ENCODE measurements at regions of chr17 and their contacts with region 1.

Region 1: GRCh38 chr17:67475236-67475937 is 98.3 kb downstream of the PITPNC1 start:
- DNase-seq: peak; percentile 88
- H3K4me3 Mint-ChIP-seq: peak overlapping the region; percentile 46
- H3K27ac Mint-ChIP-seq: peak overlapping the region; percentile 82
- H3K4me1 Mint-ChIP-seq: peaks cover 45% of the 10 kb centered on the region
- H3K27me3 Mint-ChIP-seq: peaks cover 2% of the 10 kb centered on the region

Region 2: DNA sequence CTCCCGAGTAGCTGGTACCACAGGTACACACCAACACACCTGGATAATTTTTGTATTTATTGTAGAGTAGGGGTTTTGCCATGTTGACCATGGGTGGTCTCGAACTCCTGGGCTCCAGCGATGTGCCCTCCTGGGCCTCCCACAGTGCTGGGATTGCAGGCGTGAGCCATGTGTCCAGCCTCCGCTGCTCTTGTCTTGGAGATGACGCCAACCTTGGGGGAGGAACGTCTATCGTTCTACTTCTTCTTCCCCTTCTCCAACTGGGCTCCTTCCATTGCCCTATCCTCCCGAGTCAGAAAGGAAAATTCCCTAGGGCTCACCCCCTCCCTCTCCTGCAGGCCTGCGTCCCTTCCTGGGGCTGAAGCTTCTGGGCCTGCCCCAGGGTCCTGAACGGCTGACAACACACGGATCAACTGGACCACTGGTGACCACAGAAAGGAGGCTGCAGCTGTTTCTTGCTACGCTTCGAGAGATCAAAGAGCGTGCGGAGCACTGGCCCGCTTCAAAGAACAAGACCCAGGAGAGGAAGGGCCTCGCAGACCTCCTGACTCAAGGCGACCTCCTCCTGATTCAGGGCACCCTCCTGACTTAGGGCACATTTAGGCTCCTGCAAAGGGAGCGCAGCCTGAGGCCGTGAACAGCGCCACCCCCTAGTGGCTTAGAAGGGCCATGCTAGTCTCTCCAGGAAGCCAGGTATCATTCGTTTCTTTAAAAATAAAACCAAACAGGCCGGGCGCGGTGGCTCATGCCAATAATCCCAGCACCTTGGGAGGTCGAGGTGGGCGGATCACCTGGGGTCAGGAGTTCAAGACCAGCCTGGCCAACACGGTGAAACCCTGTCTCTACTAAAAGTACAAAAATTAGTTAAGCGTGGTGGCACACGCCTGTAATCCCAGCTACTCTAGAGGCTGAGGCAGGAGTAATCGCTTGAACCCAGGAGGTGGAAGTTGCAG is 181.9 kb before region 1 on chr17:
- CTCF ChIA-PET with region 1: no interaction called
- POLR2A ChIA-PET with region 1: no interaction called
- DNase-seq: peak; percentile 81
- H3K4me3 Mint-ChIP-seq: no peak overlapping the region
- H3K27ac Mint-ChIP-seq: no peak overlapping the region
- H3K4me1 Mint-ChIP-seq: peaks cover 5% of the 10 kb centered on the region
- H3K27me3 Mint-ChIP-seq: no peaks in the 10 kb centered on the region

Region 3: DNA sequence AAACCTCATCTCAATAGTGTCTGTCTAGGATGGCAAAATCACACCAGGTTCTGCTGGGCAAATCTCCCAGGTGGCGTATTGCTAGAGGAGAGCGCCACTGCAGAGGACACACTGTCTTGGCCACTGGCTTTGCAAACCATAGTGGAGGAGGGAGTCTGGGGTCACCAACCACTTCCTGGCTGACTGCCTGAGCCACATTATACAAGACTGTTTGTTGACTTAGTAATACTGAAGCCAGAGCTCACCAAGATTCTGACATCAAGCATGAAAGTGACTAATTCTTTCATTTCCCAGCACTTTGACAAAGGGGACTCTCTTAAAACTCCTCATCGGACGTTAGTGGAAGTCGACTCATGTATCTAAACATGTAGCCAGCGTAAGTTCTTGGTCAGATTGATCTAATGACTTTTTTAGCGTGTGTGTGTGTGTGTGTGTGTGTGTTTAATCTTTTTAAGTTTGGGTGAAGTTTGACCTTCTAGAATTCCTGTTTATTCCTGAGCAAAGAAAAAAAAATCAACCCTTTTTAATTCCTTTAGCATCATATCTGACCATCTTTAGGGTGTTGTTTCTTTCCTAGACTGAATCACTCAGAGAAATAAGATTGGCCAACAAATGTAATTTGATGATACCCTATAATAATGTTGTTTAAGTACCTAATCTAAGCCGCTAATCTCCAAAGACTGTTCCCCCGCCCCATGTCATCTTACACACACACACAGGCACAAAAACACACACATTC is 84.6 kb before region 1 on chr17:
- CTCF ChIA-PET with region 1: interaction called, 140 read pairs
- POLR2A ChIA-PET with region 1: interaction called, 13 read pairs
- DNase-seq: peak; percentile 78
- H3K4me3 Mint-ChIP-seq: peak overlapping the region; percentile 40
- H3K27ac Mint-ChIP-seq: peak overlapping the region; percentile 78
- H3K4me1 Mint-ChIP-seq: peaks cover 45% of the 10 kb centered on the region
- H3K27me3 Mint-ChIP-seq: no peaks in the 10 kb centered on the region

Region 4: DNA sequence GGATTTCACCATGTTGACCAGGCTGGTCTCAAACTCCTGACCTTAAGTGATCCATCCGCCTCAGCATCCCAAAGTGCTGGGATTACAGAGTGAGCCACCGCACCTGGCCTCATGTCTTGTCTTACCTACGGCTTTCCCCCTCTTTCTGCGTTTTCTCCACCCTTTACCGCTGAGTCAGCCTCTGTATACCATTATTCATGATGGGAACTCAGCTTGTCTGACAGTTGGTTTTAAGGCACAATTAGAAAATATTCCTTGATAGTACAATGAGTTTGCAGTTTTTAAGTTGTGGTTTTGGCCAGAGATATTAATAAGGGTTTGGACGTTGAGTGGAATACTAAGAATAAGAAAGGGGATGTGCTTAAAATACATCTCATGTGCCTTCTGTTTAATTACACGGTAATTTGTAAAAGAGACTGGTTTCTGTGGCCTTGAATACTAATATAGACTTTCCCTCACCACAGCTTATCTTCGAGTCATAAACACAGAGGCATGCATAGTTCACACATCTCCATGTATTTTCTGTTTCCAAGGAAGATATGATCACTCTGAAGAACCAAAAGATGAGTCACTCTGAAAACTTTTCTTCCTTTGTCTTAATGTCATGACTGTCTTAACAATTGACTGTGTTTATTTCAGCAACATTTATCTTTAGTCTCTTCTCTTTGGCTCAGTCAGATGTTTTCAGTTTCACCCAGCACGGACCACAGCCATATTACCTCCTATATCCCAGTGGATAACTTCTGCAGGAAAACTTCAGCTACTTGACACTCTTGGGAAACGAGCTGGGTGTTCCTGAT is 43.9 kb before region 1 on chr17:
- CTCF ChIA-PET with region 1: interaction called, 26 read pairs
- POLR2A ChIA-PET with region 1: interaction called, 11 read pairs
- DNase-seq: no peak
- H3K4me3 Mint-ChIP-seq: no peak overlapping the region
- H3K27ac Mint-ChIP-seq: peak overlapping the region; percentile 11
- H3K4me1 Mint-ChIP-seq: peaks cover 55% of the 10 kb centered on the region
- H3K27me3 Mint-ChIP-seq: peaks cover 3% of the 10 kb centered on the region

Region 5: DNA sequence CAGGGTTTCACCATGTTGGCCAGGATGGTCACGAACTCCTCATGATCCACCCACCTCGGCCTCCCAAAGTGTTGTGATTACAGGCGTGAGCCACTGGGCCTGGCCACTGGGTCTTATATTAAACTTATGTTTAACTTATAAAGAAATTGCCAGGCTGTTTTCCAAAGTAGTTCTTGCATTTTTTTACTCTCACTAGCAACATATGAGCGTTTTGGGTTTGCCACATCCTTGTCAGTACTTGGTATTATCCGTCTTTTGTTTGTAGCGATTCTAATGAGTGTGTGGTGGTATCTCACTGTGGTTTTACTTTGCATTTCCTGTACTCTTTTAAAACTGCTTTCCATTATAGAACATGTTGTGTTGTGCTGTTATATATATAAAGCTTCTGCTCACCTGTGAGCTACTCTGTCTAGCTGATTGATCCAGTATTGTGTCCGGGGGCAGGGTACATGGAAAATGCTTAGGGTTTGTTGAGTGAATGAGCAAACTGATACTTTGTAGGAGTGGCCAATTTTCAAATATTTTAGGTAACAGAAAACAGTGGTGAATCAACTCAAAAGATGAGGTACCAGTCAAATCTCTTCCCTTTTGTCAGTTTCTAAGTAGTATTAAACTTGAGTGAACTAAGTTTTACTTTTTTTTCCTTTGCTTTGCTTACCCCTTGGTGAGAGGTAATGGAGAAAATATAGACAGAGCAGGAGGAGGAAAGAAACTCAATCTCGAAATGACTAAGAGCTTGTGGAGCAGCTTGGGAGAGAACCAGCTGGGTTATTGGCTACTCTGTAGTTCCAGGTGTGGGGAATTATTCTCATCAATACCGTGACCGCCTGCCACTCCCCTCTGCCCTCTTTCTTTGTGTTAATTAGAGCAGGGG is 22.5 kb before region 1 on chr17:
- CTCF ChIA-PET with region 1: interaction called, 18 read pairs
- POLR2A ChIA-PET with region 1: interaction called, 19 read pairs
- DNase-seq: peak; percentile 39
- H3K4me3 Mint-ChIP-seq: peak overlapping the region; percentile 59
- H3K27ac Mint-ChIP-seq: peak overlapping the region; percentile 95
- H3K4me1 Mint-ChIP-seq: peaks cover 62% of the 10 kb centered on the region
- H3K27me3 Mint-ChIP-seq: peaks cover 2% of the 10 kb centered on the region

Region 6: DNA sequence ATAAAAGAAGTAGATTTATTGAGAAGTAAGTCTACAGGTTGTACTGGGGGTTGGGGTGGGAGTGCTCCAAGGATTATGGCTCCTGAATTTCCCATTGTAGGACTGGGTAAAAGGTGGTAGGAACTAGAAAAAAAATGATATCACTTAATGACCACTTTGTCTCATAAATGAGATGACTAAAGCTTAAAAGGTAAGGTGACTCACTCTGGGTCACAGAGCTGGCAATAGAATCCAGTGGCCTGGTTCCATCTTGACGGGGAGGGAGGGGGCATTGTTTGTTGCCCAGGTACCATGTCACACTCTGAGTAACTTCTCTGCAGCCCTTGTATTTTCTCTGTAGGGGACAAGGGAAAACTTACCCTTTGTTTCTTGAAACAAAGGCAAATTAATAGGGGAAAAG is 27.8 kb after region 1 on chr17:
- CTCF ChIA-PET with region 1: no interaction called
- POLR2A ChIA-PET with region 1: no interaction called
- DNase-seq: no peak
- H3K4me3 Mint-ChIP-seq: no peak overlapping the region
- H3K27ac Mint-ChIP-seq: no peak overlapping the region
- H3K4me1 Mint-ChIP-seq: peaks cover 12% of the 10 kb centered on the region
- H3K27me3 Mint-ChIP-seq: no peaks in the 10 kb centered on the region